ENCODE measurements at regions of chr5 and their contacts with region 1.

Region 1: GRCh38 chr5:151051066-151051930 is 29.5 kb downstream of the TNIP1 start:
- DNase-seq: peak; percentile 72
- H3K4me3 Mint-ChIP-seq: no peak overlapping the region
- H3K27ac Mint-ChIP-seq: peak overlapping the region; percentile 43
- H3K4me1 Mint-ChIP-seq: peaks cover 4% of the 10 kb centered on the region
- H3K27me3 Mint-ChIP-seq: no peaks in the 10 kb centered on the region

Region 2: GRCh38 chr5:151068433-151069197 is 17.3 kb after region 1 on chr5:
- CTCF ChIA-PET with region 1: interaction called, 11 read pairs
- POLR2A ChIA-PET with region 1: no interaction called
- DNase-seq: no peak
- H3K4me3 Mint-ChIP-seq: no peak overlapping the region
- H3K27ac Mint-ChIP-seq: no peak overlapping the region
- H3K4me1 Mint-ChIP-seq: peaks cover 70% of the 10 kb centered on the region
- H3K27me3 Mint-ChIP-seq: no peaks in the 10 kb centered on the region

Region 3: GRCh38 chr5:151110122-151110681 is 58.9 kb after region 1 on chr5:
- CTCF ChIA-PET with region 1: interaction called, 77 read pairs
- POLR2A ChIA-PET with region 1: no interaction called
- DNase-seq: no peak
- H3K4me3 Mint-ChIP-seq: no peak overlapping the region
- H3K27ac Mint-ChIP-seq: no peak overlapping the region
- H3K4me1 Mint-ChIP-seq: no peaks in the 10 kb centered on the region
- H3K27me3 Mint-ChIP-seq: no peaks in the 10 kb centered on the region

Measured in activated CD4-positive, alpha-beta T cell treated with anti-CD3 and anti-CD28 coated beads, Interleukin-2, amount 10 ng/mL, durations not matched to agents 7 days and 5 days (primary cell).